Breast epithelium (tissue), 4 donors: ENCODE measurements at regions of chr12 and their contacts with region 1.

Region 1: GRCh38 chr12:120356567-120357030 is 12.4 kb downstream of the MSI1 start:
- DNase-seq: peak; percentile 82 to 86
- H3K4me3 ChIP-seq: peak overlapping the region in 1 of 3 donors; percentile 44
- H3K27ac ChIP-seq: no peak overlapping the region
- H3K4me1 ChIP-seq: no peaks in the 10 kb centered on the region
- H3K27me3 ChIP-seq: no peaks in the 10 kb centered on the region
- CTCF ChIP-seq: peak; percentile 78 to 92 (median 81)
- POLR2A ChIP-seq: no peak

Region 2: GRCh38 chr12:120373683-120374082 is 17.1 kb after region 1 on chr12:
- intact Hi-C with region 1: loop called (anchors 1 kb)
- DNase-seq: no peak
- H3K4me3 ChIP-seq: no peak overlapping the region
- H3K27ac ChIP-seq: no peak overlapping the region
- H3K4me1 ChIP-seq: no peaks in the 10 kb centered on the region
- H3K27me3 ChIP-seq: peaks cover 0 to 10% of the 10 kb centered on the region in 2 donors
- CTCF ChIP-seq: no peak
- POLR2A ChIP-seq: no peak